SK-N-SH (cell line): ENCODE measurements at regions of chr2 and their contacts with region 1.

Region 1: GRCh38 chr2:29309090-29310029 is 194.1 kb downstream of the CLIP4 start:
- DNase-seq: peak; percentile 78
- H3K4me3 ChIP-seq: no peak overlapping the region
- H3K27ac ChIP-seq: peak overlapping the region in 1 of 2 experiments; percentile 93; a peak in 2 of 4 replicates
- H3K4me1 ChIP-seq: peaks cover 7 to 82% of the 10 kb centered on the region in 2 experiments; a peak in 2 of 4 replicates
- H3K27me3 ChIP-seq: no peaks in the 10 kb centered on the region
- CTCF ChIP-seq: peak; percentile 95
- EP300 ChIP-seq: no peak
- RAD21 ChIP-seq: peak; percentile 73

Region 2: DNA sequence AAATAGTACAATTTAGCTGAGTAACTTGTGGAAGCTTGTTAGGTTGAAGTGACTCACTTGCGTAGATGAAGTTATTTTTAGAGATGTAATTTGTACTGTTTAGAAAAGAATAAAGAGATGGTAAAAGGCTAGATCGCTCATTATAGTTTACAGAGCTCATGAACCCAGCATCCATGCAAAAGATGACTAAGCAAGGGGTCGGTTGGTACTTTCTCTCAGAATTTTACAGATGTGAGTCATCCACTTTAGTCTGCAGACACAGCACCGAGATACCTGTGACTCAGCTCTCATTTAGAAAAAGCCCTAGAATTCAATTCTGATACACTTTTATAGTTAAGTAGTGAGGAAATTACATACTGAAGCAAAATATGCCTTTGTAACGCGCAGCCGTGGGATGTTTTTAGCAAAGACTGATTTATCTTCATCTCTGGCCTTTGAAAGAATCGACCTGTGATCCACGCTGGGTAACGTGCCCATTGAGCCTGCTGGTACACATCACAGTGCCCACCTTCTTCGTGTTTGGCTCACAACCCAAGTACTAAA is 1033.2 kb before region 1 on chr2:
- CTCF ChIA-PET with region 1: no interaction called
- POLR2A ChIA-PET with region 1: no interaction called
- DNase-seq: no peak
- H3K4me3 ChIP-seq: no peak overlapping the region
- H3K27ac ChIP-seq: peak overlapping the region; percentile 61 to 96
- H3K4me1 ChIP-seq: peaks cover 11 to 36% of the 10 kb centered on the region in 2 experiments; a peak in 3 of 4 replicates
- H3K27me3 ChIP-seq: no peaks in the 10 kb centered on the region
- CTCF ChIP-seq: no peak
- EP300 ChIP-seq: peak in 1 of 2 experiments; percentile 98; a peak in 2 of 4 replicates
- RAD21 ChIP-seq: no peak

Region 3: DNA sequence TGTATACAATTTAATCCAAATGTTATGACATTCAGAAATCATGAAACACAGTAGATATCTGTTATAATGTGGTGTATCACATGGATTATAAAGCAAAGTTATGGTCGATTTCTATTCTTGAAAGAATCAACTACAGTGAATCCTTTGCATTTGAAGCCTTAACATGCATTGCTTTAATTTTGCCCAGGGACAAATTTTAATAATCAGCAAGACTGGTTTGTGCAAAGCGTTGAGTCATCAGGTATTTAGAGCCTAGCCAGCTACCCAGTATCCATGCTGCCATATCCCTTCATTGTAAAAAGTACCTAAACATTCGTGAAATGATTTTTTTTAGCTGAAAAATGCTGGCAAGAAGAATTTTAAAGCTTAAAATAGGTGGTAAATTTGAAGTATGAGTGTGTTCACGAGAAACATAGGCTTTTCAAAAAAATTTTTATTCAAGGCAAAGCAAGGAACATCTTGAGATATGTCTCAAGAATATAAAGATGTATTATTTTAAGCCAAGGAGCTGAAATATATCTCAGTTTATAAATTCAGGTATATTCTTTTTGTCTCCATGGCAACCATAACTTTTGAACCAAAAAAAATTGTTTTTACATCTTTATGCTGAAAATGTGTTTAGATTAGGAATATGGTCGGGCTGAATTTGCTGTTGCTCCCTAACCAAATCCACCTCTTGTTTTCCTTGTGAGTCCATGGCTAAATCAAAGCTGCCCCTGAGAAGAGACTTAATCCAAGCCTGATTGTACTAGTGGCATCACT is 507.5 kb before region 1 on chr2:
- CTCF ChIA-PET with region 1: no interaction called
- POLR2A ChIA-PET with region 1: no interaction called
- DNase-seq: no peak
- H3K4me3 ChIP-seq: no peak overlapping the region
- H3K27ac ChIP-seq: no peak overlapping the region
- H3K4me1 ChIP-seq: peaks cover 0 to 6% of the 10 kb centered on the region in 2 experiments; a peak in 2 of 4 replicates
- H3K27me3 ChIP-seq: no peaks in the 10 kb centered on the region
- CTCF ChIP-seq: no peak
- EP300 ChIP-seq: no peak
- RAD21 ChIP-seq: no peak

Region 4: GRCh38 chr2:29273685-29274611 is 35.4 kb before region 1 on chr2:
- CTCF ChIA-PET with region 1: interaction called, 38 read pairs
- POLR2A ChIA-PET with region 1: interaction called, 10 read pairs
- DNase-seq: peak; percentile 80
- H3K4me3 ChIP-seq: no peak overlapping the region
- H3K27ac ChIP-seq: peak overlapping the region in 1 of 2 experiments; percentile 100; a peak in 2 of 4 replicates
- H3K4me1 ChIP-seq: peaks cover 2 to 86% of the 10 kb centered on the region in 2 experiments; a peak in 3 of 4 replicates
- H3K27me3 ChIP-seq: peaks cover 17% of the 10 kb centered on the region; the same call in 1 of the 2 replicates
- CTCF ChIP-seq: no peak
- EP300 ChIP-seq: peak in 1 of 2 experiments; percentile 94; a peak in 2 of 4 replicates
- RAD21 ChIP-seq: peak; percentile 39

Region 5: GRCh38 chr2:29295857-29296256 is 13.5 kb before region 1 on chr2:
- CTCF ChIA-PET with region 1: interaction called, 43 read pairs
- POLR2A ChIA-PET with region 1: no interaction called
- DNase-seq: peak; percentile 54
- H3K4me3 ChIP-seq: no peak overlapping the region
- H3K27ac ChIP-seq: peak overlapping the region in 1 of 2 experiments; percentile 16; a peak in 1 of 4 replicates
- H3K4me1 ChIP-seq: no peaks in the 10 kb centered on the region; a peak in 2 of 4 replicates
- H3K27me3 ChIP-seq: no peaks in the 10 kb centered on the region
- CTCF ChIP-seq: peak; percentile 49
- EP300 ChIP-seq: no peak
- RAD21 ChIP-seq: peak; percentile 88

Region 6: DNA sequence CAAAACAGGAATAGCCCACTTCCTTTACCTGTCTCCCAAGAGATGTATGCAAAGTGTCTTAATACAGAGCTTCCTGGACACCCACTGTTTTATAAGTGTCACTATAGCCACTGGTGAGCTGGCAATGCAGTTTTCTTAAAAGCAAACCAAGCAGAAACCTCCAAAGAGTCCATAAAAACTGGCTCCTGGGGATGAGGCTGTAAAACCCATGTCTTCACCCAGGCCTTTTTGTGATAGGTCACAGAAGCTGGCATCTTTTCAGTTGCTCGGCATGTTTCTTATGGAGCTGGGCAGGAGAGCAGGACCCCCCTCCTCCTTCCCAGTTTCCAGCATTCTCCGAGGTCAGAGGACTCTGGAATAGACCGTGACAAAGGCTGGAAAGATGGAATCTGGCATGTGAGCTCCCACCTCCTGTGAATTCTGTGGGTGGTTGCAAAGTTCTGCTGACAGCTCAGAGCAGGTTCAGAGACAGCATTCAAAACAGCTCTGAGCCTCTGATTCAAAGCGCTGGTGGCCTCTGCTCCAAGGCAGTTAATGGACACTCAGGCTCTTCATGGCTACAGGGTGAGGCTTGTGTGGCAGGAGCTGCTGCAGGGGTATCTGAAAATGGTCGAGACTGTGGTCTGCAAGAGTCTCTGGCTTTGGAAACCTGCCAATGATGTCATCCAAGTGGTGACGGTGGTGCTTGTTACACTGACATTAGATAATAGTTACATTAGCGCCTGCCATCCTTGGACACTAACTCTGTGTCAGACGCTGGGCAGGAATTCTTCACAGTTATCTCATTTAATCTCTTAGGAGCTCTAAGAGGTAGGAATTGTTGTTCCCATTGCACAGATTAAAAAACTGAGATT is 89.3 kb after region 1 on chr2:
- CTCF ChIA-PET with region 1: interaction called, 37 read pairs
- POLR2A ChIA-PET with region 1: no interaction called
- DNase-seq: peak; percentile 71
- H3K4me3 ChIP-seq: no peak overlapping the region
- H3K27ac ChIP-seq: peak overlapping the region in 1 of 2 experiments; percentile 93; a peak in 2 of 4 replicates
- H3K4me1 ChIP-seq: peaks cover 0 to 66% of the 10 kb centered on the region in 2 experiments; a peak in 2 of 4 replicates
- H3K27me3 ChIP-seq: no peaks in the 10 kb centered on the region
- CTCF ChIP-seq: no peak
- EP300 ChIP-seq: peak in 1 of 2 experiments; percentile 64; a peak in 1 of 4 replicates
- RAD21 ChIP-seq: peak; percentile 10

Region 7: GRCh38 chr2:29558097-29558496 is 248.7 kb after region 1 on chr2:
- CTCF ChIA-PET with region 1: interaction called, 10 read pairs
- POLR2A ChIA-PET with region 1: no interaction called
- DNase-seq: no peak
- H3K4me3 ChIP-seq: no peak overlapping the region
- H3K27ac ChIP-seq: peak overlapping the region in 1 of 2 experiments; percentile 36; a peak in 1 of 4 replicates
- H3K4me1 ChIP-seq: peaks cover 0 to 31% of the 10 kb centered on the region in 2 experiments; a peak in 2 of 4 replicates
- H3K27me3 ChIP-seq: no peaks in the 10 kb centered on the region; the same call in 1 of the 2 replicates
- CTCF ChIP-seq: no peak
- EP300 ChIP-seq: no peak
- RAD21 ChIP-seq: no peak